BJ (cell line): ENCODE measurements at regions of chr10 and their contacts with region 1.

Region 1: DNA sequence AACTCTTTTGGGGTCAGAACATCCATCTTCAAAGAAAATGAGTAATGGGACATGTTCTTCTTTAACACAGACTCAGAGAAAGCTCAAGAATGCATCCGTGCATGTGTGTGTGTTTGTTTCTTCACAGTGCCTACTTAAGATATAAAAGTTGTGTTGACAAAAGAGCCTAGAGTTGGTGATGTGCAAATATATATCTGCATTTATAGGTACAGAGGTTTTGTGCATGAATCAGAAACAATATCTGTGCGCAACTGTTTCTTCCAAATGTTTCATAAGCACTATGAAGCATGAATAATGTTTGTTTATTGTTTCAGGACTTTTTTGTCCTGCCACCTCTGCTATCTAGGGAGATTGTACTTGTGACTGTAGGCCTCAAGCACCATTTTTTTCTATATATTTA is 229.7 kb downstream of the CSTF2T start:
- DNase-seq: no peak
- H3K4me3 ChIP-seq: no peak overlapping the region
- H3K27me3 ChIP-seq: no peaks in the 10 kb centered on the region
- CTCF ChIP-seq: no peak

Region 2: GRCh38 chr10:51224671-51225161 is 244.9 kb before region 1 on chr10:
- CTCF ChIA-PET with region 1: no interaction called
- POLR2A ChIA-PET with region 1: interaction called, 10 read pairs
- DNase-seq: peak; percentile 78
- H3K4me3 ChIP-seq: no peak overlapping the region
- H3K27me3 ChIP-seq: no peaks in the 10 kb centered on the region
- CTCF ChIP-seq: no peak

Region 3: DNA sequence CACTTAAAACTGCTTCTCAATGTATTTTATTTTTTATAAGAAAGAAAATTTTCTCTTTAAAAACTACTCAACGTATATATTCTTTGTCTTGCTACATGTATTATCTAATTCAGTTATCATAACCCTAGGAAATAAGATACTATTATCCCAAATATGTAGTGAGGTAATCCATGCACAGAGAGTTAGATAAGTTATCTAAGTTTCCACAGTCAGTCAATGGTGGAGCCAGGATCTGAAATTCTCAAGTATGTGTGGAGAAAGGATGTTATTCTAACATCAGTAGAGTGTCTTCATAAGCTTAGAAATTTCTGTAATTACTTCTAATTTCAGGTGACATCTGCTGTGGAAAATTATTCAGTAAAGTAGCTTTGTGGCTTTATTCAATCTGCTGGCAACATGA is 10.2 kb before region 1 on chr10:
- CTCF ChIA-PET with region 1: no interaction called
- POLR2A ChIA-PET with region 1: no interaction called
- DNase-seq: no peak
- H3K4me3 ChIP-seq: no peak overlapping the region
- H3K27me3 ChIP-seq: no peaks in the 10 kb centered on the region
- CTCF ChIP-seq: no peak